ENCODE measurements at regions of chr3 and their contacts with region 1.

Region 1: GRCh38 chr3:122679085-122679881 is 1.4 kb upstream of the PARP14 start:
- DNase-seq: peak; percentile 79
- ATAC-seq: peak; percentile 58
- H3K4me3 Mint-ChIP-seq: peak overlapping the region; percentile 83
- H3K27ac Mint-ChIP-seq: no peak overlapping the region
- H3K4me1 Mint-ChIP-seq: peaks cover 28% of the 10 kb centered on the region
- H3K27me3 Mint-ChIP-seq: peaks cover 19% of the 10 kb centered on the region
- CTCF ChIP-seq: peak; percentile 53

Region 2: GRCh38 chr3:122383771-122384697 is 295.2 kb before region 1 on chr3 and contains the start of gene FAM162A:
- CTCF ChIA-PET with region 1: interaction called, 15 read pairs
- POLR2A ChIA-PET with region 1: interaction called, 6 read pairs
- DNase-seq: peak; percentile 94
- ATAC-seq: peak; percentile 94
- H3K4me3 Mint-ChIP-seq: peak within 1 kb of the TSS; percentile 90
- H3K27ac Mint-ChIP-seq: peak within 1 kb of the TSS; percentile 98
- H3K4me1 Mint-ChIP-seq: peaks cover 45% of the 10 kb centered on the region
- H3K27me3 Mint-ChIP-seq: no peaks in the 10 kb centered on the region
- CTCF ChIP-seq: no peak
- total RNA-seq, gene FAM162A: 83.9 to 141 TPM (median 128 TPM) in 3 replicates

Region 3: DNA sequence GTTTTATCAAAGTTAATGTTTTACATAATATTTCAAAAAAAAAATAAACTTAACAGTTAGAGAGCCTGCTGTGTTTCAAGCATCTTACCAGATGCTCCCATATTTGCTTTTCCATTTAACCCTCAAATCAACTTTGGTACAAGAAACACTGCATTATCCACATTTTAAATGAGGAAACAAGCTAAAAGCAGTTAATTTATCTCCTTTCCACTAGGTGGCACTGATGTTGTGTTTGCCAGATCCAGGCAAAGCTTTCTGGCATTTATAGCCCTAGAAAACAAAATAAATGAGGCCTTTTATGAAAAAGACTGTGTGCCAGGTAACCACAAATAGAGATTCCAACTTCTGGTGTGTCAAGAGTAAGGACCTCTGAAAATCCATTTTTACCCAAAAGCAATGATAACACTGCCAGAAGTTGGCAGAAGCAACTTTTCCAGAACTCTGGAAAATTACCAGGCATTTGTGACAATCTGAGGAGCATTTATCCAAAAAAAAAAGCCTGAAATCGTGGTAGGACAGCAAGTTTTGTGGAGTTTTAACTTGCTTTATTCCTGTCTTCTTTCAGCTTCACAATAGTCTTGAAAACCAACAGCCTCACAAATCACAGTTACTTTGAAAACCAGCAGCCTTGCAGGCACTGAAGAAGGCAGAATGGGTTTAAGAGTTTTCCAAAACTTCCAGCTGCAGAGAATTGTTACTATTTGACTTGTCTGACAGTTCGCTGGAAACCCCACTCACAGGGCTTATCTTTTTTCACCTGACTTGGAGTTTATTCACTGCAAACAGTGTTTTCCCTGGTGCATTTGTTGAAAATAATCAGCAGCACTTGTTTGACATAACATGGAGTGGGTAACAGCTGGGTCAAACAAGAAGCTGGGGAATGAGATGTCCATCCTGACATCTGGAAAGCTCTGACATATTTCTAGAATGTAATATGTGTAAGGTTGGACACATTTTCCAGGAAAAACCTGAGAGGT is 286.1 kb before region 1 on chr3:
- CTCF ChIA-PET with region 1: interaction called, 35 read pairs
- POLR2A ChIA-PET with region 1: no interaction called
- DNase-seq: no peak
- ATAC-seq: no peak; the same call in 1 of the 2 replicates
- H3K4me3 Mint-ChIP-seq: no peak overlapping the region
- H3K27ac Mint-ChIP-seq: no peak overlapping the region
- H3K4me1 Mint-ChIP-seq: peaks cover 19% of the 10 kb centered on the region
- H3K27me3 Mint-ChIP-seq: no peaks in the 10 kb centered on the region
- CTCF ChIP-seq: peak; percentile 50; the same call in 1 of the 2 replicates

Region 4: GRCh38 chr3:122415720-122416654 is 263.3 kb before region 1 on chr3 and contains the start of gene WDR5B:
- CTCF ChIA-PET with region 1: interaction called, 16 read pairs
- POLR2A ChIA-PET with region 1: no interaction called
- DNase-seq: peak; percentile 98
- ATAC-seq: peak; percentile 88
- H3K4me3 Mint-ChIP-seq: peak within 1 kb of the TSS; percentile 95
- H3K27ac Mint-ChIP-seq: peak within 1 kb of the TSS; percentile 95
- H3K4me1 Mint-ChIP-seq: peaks cover 17% of the 10 kb centered on the region
- H3K27me3 Mint-ChIP-seq: no peaks in the 10 kb centered on the region
- CTCF ChIP-seq: no peak
- total RNA-seq, gene WDR5B: 2.6 to 2.9 TPM (median 2.8 TPM) in 3 replicates

Region 5: DNA sequence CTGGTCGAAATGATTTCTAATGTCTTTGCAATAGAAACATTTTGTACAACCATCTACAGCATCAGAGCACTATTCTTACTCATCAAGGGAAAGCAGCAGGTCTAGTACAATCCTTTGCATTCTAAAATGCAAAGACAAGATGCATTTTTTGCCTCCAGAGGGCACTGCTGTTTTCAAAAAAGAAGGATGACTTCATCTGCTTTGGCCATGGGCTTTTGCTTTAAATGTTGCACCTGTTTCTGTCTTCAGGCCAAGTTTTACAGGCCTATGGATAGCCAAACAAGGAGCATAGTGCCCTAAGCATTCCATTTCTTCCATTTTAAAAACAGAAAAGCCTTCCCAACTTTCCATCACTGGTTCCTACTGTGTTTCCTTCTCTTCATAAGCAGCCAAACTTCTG is 118.6 kb before region 1 on chr3:
- CTCF ChIA-PET with region 1: interaction called, 17 read pairs
- POLR2A ChIA-PET with region 1: no interaction called
- DNase-seq: no peak
- ATAC-seq: peak; percentile 13
- H3K4me3 Mint-ChIP-seq: no peak overlapping the region
- H3K27ac Mint-ChIP-seq: peak overlapping the region; percentile 90
- H3K4me1 Mint-ChIP-seq: peaks cover 33% of the 10 kb centered on the region
- H3K27me3 Mint-ChIP-seq: peaks cover 6% of the 10 kb centered on the region
- CTCF ChIP-seq: no peak

Region 6: GRCh38 chr3:122602011-122602710 is 77.1 kb before region 1 on chr3:
- CTCF ChIA-PET with region 1: no interaction called
- POLR2A ChIA-PET with region 1: no interaction called
- DNase-seq: no peak
- ATAC-seq: no peak
- H3K4me3 Mint-ChIP-seq: no peak overlapping the region
- H3K27ac Mint-ChIP-seq: no peak overlapping the region
- H3K4me1 Mint-ChIP-seq: peaks cover 6% of the 10 kb centered on the region
- H3K27me3 Mint-ChIP-seq: no peaks in the 10 kb centered on the region
- CTCF ChIP-seq: no peak

Region 7: GRCh38 chr3:122660297-122660974 is 18.8 kb before region 1 on chr3:
- CTCF ChIA-PET with region 1: interaction called, 11 read pairs
- POLR2A ChIA-PET with region 1: no interaction called
- DNase-seq: peak; percentile 76
- ATAC-seq: peak; percentile 96
- H3K4me3 Mint-ChIP-seq: no peak overlapping the region
- H3K27ac Mint-ChIP-seq: no peak overlapping the region
- H3K4me1 Mint-ChIP-seq: no peaks in the 10 kb centered on the region
- H3K27me3 Mint-ChIP-seq: peaks cover 8% of the 10 kb centered on the region
- CTCF ChIP-seq: no peak; the same call in 1 of the 2 replicates

Region 8: GRCh38 chr3:122961146-122961545 is 281.9 kb after region 1 on chr3:
- CTCF ChIA-PET with region 1: no interaction called
- POLR2A ChIA-PET with region 1: no interaction called
- DNase-seq: no peak
- ATAC-seq: no peak
- H3K4me3 Mint-ChIP-seq: no peak overlapping the region
- H3K27ac Mint-ChIP-seq: no peak overlapping the region
- H3K4me1 Mint-ChIP-seq: peaks cover 58% of the 10 kb centered on the region
- H3K27me3 Mint-ChIP-seq: no peaks in the 10 kb centered on the region
- CTCF ChIP-seq: no peak